CD8-positive, alpha-beta T cell (primary cell): ENCODE measurements at regions of chr18 and their contacts with region 1.

Region 1: DNA sequence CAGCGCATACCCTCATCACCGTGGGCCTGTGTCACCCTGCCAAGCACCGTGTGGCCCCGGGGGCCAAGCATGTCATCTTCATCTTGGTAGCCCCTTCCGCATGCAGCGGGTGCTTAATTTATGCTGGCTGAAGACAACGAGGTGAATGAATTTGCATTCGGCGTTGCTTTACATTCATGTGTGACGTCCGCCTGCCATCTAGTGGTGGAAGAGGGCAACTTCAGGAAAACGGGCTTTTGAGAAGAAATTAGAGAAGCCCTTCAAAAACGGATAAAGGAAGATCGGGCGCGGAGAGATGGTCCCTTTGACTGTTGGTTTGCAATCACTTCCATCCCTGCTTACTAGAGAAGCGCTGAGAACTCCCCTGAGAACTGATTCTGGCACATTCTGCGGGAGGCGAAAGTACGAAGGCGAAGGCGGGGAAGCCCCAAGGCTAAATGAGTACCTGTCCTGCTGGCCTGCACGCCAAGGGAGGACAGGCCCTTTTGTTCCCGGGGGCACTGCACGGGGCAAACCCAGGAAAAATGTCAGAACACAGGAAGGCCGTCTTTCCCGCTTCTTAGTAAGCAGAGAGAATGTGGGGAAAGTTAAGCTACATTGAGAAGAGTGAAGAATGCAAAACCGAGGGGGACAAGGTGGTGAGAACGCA is 145.9 kb downstream of the ZNF516 start:
- DNase-seq: peak in 8 of 9 experiments; percentile 40 to 74 (median 60)
- ATAC-seq: peak; percentile 49
- H3K4me3 ChIP-seq: no peak overlapping the region
- H3K4me3 Mint-ChIP-seq: no peak overlapping the region
- H3K27ac ChIP-seq: no peak overlapping the region
- H3K27ac Mint-ChIP-seq: no peak overlapping the region
- H3K4me1 ChIP-seq: no peaks in the 10 kb centered on the region
- H3K4me1 Mint-ChIP-seq: peaks cover 4% of the 10 kb centered on the region
- H3K27me3 ChIP-seq: no peaks in the 10 kb centered on the region
- H3K27me3 Mint-ChIP-seq: peaks cover 7% of the 10 kb centered on the region
- CTCF ChIP-seq: peak; percentile 77

Region 2: DNA sequence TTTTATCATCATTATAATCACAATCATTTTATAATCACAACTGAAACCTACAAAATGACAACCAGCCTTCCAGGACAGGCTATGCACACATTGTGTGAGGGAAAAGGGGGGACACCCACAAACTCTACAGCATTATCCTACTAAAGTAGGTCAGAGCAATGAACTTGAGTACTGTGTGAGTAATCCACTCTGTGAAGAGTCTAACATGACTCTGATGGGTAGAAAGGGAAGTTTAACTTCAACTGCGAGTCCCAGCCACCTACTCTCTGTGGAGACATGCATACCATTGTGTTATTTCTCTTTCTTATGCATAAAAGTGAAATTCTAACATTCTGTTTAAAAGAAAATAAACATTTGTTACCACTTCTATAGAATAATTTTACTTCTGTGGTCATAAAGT is 32.1 kb before region 1 on chr18:
- CTCF ChIA-PET with region 1: interaction called, 3 read pairs
- POLR2A ChIA-PET with region 1: no interaction called
- intact Hi-C with region 1: loop called in 1 of 2 experiments (anchors 1 kb)
- DNase-seq: no peak
- ATAC-seq: no peak
- H3K4me3 ChIP-seq: no peak overlapping the region
- H3K4me3 Mint-ChIP-seq: no peak overlapping the region
- H3K27ac ChIP-seq: no peak overlapping the region
- H3K27ac Mint-ChIP-seq: no peak overlapping the region
- H3K4me1 ChIP-seq: no peaks in the 10 kb centered on the region
- H3K4me1 Mint-ChIP-seq: no peaks in the 10 kb centered on the region
- H3K27me3 ChIP-seq: peaks cover 0 to 3% of the 10 kb centered on the region in 2 experiments
- H3K27me3 Mint-ChIP-seq: peaks cover 4% of the 10 kb centered on the region
- CTCF ChIP-seq: no peak

Region 3: DNA sequence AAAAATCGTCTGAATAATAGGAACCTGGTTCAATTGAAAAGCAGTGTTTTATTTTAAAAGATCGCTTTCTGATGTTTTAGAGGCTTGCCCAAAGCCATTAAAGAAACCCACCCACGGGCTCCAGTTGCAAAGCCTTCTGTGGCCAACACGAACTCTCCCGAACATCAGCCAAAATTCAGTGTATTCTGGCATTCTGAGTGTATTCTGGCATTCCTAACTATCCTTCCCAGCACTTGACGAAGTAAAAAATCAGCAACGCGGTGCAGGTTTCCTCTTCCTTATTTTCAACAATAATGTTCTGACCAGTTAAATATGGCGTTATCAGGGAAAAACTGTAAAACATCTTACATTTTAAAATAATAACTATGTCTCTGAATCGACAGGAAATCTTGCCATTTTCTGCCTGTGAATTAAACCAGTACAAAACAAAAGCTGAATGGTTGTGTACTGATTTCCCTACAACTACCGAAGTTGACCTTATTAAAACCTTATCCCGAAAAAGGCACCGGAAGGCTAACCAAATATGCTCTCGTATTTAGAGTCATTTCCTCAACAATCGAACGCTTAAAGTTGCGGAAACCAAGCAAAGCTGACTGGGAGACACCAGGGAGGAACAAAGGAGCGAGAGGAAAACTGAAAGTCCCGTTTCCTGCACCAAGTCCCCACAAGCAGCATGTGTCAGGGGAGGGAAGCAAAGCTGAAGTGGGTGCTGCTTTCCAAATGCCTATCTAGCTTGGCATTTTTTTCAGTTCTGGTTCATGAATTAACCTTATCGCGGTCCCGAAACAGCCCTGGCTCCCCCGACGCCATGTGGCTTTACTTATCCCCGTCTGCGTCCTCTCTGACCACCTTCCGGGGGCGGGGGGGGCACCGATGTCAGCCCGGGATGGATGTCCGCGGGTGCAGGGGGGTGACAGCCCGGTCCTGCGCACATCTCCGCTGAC is 101.5 kb after region 1 on chr18:
- CTCF ChIA-PET with region 1: no interaction called
- POLR2A ChIA-PET with region 1: no interaction called
- intact Hi-C with region 1: no loop called
- DNase-seq: peak in 2 of 9 experiments; percentile 26 to 49
- ATAC-seq: peak; percentile 40
- H3K4me3 ChIP-seq: peak overlapping the region; percentile 51 to 52
- H3K4me3 Mint-ChIP-seq: peak overlapping the region; percentile 90
- H3K27ac ChIP-seq: no peak overlapping the region
- H3K27ac Mint-ChIP-seq: no peak overlapping the region
- H3K4me1 ChIP-seq: peaks cover 25% of the 10 kb centered on the region
- H3K4me1 Mint-ChIP-seq: peaks cover 42% of the 10 kb centered on the region
- H3K27me3 ChIP-seq: no peaks in the 10 kb centered on the region
- H3K27me3 Mint-ChIP-seq: peaks cover 5% of the 10 kb centered on the region
- CTCF ChIP-seq: no peak